Right ventricle myocardium inferior (tissue), 1 donor: ENCODE measurements at regions of chr18 and their contacts with region 1.

Region 1: GRCh38 chr18:10242936-10243680 is 211.3 kb upstream of the APCDD1 start:
- DNase-seq: no peak
- ATAC-seq: no peak

Region 2: GRCh38 chr18:10041180-10041579 is 201.9 kb before region 1 on chr18:
- intact Hi-C with region 1: loop called (anchors 5 kb)
- DNase-seq: peak; percentile 85
- ATAC-seq: peak; percentile 92

Region 3: DNA sequence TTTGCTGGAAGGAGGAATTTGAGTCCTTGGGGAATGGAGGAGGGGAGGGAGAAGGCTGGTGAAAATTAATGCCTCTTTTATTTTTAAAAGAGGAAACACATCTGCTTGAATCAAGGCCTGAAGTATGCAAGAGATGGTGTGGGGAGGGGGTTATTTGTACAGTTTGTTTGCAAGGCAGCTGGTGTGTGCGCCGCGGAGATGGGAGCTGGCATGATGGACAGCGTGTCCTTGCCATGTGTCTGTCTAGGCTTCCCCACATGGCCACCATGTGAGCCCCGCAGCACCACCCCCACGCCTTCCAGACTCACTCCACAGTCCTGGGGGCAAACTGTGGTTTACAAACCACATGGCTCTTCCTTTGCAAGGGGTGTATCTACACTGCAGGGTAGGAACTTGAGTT is 56.5 kb after region 1 on chr18:
- intact Hi-C with region 1: no loop called
- DNase-seq: no peak
- ATAC-seq: peak; percentile 23

Region 4: GRCh38 chr18:10401521-10401920 is 158.4 kb after region 1 on chr18:
- intact Hi-C with region 1: loop called (anchors 10 kb)
- DNase-seq: no peak
- ATAC-seq: no peak